PC-3 (cell line): ENCODE measurements at regions of chr18 and their contacts with region 1.

Region 1: GRCh38 chr18:28594034-28594433 is 417.1 kb upstream of the CDH2 start:
- DNase-seq: peak; percentile 80
- ATAC-seq: peak; percentile 82
- H3K4me3 ChIP-seq: no peak overlapping the region
- H3K27ac ChIP-seq: peak overlapping the region; percentile 57
- H3K4me1 ChIP-seq: peaks cover 20% of the 10 kb centered on the region
- H3K27me3 ChIP-seq: no peaks in the 10 kb centered on the region
- CTCF ChIP-seq: no peak

Region 2: GRCh38 chr18:28512357-28512756 is 81.7 kb before region 1 on chr18:
- CTCF ChIA-PET with region 1: no interaction called
- POLR2A ChIA-PET with region 1: no interaction called
- intact Hi-C with region 1: loop called (anchors 5 kb)
- DNase-seq: no peak
- ATAC-seq: no peak
- H3K4me3 ChIP-seq: no peak overlapping the region
- H3K27ac ChIP-seq: no peak overlapping the region
- H3K4me1 ChIP-seq: peaks cover 21% of the 10 kb centered on the region
- H3K27me3 ChIP-seq: no peaks in the 10 kb centered on the region
- CTCF ChIP-seq: no peak

Region 3: GRCh38 chr18:28581521-28582071 is 12.4 kb before region 1 on chr18:
- CTCF ChIA-PET with region 1: no interaction called
- POLR2A ChIA-PET with region 1: no interaction called
- intact Hi-C with region 1: no loop called
- DNase-seq: no peak
- ATAC-seq: no peak
- H3K4me3 ChIP-seq: no peak overlapping the region
- H3K27ac ChIP-seq: no peak overlapping the region
- H3K4me1 ChIP-seq: peaks cover 14% of the 10 kb centered on the region
- H3K27me3 ChIP-seq: no peaks in the 10 kb centered on the region
- CTCF ChIP-seq: no peak